ENCODE measurements at regions of chr6 and their contacts with region 1.

Region 1: DNA sequence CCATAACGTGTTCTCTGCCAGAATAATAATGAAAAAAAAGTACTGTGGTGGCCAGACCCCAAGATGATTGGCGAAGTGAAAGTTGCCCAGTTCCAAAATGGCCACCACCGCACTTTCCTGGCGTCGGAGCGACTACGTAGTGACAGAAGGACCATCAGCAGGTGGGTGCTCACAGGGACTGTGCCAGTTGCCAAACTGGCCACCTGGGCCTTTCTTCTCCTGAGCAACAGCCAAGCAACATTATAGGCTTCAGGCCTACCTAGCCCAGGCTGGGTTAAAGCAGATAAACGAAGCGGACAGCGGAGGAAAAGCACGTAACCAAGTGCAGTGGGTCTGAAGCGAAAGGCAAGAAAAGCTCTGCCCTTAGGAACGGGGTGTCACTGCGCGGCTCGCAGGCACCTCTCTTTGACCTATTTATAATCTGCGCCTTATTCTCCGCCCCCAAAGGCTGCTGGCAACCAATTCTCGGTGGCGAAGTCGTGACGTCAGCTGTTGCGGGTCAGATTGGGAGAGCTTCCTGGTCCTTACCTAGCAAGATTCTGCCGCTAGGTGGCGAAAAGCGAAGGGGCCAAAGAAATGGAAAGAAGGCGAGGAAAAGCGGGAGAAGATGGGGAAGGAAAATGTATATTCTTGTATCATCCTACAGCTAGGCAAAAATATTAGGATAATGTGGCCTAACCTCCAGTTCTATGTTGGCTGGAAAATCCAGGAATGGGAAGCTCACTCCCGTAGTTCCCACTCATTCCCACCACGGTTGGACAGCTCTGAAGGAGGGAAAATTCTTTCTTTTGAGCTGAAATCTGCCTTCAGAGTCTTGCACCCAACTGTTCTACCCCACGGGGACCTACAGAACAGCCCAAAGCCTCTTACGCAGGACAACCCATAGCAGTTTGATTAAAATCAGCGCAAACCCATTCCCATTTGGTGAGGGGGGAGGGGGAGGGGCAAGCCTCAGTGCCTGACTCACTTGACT is 6.9 kb upstream of the MOG start:
- DNase-seq: peak; percentile 97
- CTCF ChIP-seq: peak; percentile 87

Region 2: DNA sequence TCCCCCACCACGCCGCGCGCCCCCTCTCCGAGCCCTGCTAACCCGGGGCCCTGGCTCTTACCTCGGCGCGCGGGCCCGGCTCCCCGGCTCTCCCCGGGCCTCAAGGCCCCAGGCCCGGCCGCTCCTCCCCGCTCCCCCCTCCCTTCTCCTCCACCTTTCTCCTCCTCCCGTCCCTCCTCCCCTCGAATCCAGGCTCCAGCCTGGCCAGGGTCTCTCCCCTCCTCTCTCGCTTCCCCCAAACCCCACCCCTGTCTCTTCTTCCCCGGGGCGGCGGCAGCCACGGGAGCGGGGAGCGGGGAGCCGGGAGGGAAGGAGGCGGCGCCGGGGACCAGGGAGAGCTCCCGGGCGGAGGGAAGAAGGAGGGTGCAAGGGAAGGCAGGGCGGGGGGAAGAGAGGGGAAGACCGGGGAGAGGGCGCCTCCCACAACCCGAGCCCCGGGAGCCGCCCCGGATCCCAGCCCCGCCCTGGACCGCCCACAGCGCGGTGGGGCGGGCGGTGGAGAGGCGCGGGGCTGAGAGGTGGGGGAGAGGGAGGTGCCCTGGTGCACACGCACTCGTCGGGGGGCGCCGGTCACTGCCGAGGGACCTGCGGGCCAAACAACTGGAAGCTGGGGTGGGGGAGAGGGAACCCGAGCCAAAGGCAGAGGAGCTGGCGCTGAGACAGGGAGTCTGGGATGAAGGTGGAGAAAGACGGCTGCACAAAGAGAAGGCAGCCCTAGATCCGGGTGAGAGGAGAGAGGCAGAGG is 17.0 kb before region 1 on chr6 and contains the start of gene GABBR1:
- CTCF ChIA-PET with region 1: interaction called, 98 read pairs
- POLR2A ChIA-PET with region 1: interaction called, 4 read pairs
- DNase-seq: peak; percentile 93
- CTCF ChIP-seq: no peak

Region 3: GRCh38 chr6:29676981-29677601 is 27.1 kb after region 1 on chr6:
- CTCF ChIA-PET with region 1: interaction called, 28 read pairs
- POLR2A ChIA-PET with region 1: no interaction called
- DNase-seq: no peak
- CTCF ChIP-seq: no peak

Region 4: DNA sequence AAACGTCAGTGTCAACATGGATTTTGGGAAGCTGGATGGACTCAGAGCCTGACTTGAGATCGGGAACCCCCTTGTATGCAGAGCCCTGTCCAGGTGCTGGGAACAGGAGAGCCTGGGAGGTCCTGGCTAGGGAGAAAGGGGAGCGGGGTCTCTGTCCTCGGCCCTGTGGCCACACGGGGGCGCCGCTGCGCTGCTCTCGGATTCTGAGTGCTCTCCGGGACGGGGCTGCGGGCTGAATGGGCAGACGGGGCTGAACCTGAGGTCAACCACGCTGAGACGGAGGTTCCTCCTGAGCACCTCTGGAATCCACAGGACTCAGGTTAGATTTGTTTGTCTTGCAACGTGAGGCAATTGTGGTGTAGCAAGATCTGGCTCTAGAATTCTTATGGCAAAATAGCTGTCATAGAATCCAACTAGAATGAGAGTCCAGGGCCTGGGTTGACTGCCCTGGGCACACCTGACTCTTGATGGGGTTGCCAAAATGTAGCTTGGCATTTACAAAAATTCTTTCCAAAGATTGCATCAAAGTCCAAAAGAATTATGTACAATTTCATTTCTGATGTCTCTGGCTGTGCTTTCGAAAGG is 52.6 kb after region 1 on chr6:
- CTCF ChIA-PET with region 1: interaction called, 13 read pairs
- POLR2A ChIA-PET with region 1: no interaction called
- DNase-seq: peak; percentile 66
- CTCF ChIP-seq: peak; percentile 70

Region 5: DNA sequence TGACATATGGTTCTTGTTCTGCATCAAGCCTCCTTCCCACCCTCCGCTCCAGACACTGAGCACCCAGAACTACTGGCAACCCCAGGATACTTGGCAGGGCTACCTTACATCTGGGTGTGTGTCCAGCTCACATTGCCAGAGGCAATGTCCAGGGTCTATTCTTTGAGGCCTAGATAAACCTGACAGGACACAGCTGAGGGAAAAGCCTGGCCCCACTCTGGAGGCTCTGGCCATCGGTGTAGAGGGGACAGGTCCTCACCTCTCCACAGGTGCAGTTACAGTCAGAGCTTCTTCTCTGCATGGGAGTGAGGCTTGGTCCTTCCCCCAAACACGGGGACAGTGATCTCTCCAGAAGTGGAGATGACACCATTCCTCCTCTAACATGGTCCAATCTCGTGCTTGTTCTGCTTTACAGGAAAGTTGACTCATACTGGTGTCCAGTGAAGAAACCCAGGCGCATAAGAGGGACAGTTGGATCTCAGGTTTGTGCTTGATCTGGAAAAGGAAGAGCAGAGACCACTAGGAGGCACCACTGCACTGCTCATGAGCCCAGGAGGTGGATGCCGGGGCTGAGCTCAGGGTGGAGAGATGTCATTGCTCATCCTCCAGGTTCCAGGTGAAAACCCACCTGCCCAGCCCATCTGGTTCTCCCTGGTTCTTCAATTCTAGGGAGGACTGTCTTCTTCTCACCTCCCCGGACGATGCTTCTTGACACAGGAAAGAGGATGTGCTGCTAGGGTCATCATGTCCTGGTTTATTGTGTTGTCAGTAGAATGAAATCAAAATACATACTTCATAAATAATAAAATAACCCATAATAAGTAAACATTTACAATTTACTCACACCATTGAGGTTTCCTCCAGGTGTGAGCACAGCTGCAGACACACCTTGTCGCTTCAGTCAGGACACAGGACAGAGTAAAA is 88.0 kb after region 1 on chr6:
- CTCF ChIA-PET with region 1: interaction called, 11 read pairs
- POLR2A ChIA-PET with region 1: no interaction called
- DNase-seq: peak; percentile 66
- CTCF ChIP-seq: peak; percentile 76

Region 6: DNA sequence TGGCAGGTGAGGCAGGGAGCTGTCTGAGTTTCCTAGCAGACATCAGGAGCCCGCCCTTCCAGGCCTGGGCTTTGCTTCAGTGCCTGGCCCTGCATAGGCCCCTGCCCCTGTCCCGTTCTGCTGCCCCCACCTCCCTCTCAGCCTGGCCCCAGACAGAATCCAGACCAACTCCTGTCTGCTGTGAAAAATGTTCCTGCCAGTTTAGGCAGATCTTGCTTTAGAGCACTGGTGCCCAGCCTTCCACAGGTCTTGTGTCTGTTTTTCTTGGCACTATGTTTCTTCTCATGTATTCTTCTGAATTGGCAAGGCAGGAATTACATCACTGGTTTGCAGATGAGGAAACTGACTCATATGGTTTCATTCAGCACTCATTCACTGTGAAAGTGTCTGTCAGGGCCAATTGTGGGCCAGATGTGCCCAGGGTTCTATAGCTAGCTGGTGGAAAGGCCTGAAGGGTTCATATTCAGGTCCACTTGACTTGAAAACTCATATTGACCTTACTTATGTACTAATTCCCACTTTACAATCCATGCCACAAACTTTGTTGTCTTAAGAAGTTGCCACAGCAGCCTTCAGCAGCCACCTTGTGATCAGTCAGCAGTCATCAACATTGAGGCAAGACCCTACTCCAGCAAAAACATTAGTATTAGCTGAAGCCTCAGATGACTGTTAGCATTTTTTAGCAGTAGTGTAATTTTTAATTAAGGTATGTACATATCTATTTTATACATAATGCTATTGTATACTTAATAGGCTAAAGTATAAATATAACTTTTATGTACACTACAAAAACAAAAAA is 113.7 kb after region 1 on chr6:
- CTCF ChIA-PET with region 1: interaction called, 19 read pairs
- POLR2A ChIA-PET with region 1: no interaction called
- DNase-seq: peak; percentile 24
- CTCF ChIP-seq: no peak